ENCODE measurements at regions of chr12 and their contacts with region 1.

Region 1: GRCh38 chr12:12736759-12737676 is 19.9 kb downstream of the CDKN1B start:
- DNase-seq: peak; percentile 84
- ATAC-seq: peak; percentile 95
- H3K4me3 Mint-ChIP-seq: peak overlapping the region; percentile 73
- H3K27ac Mint-ChIP-seq: peak overlapping the region; percentile 89
- H3K4me1 Mint-ChIP-seq: peaks cover 68% of the 10 kb centered on the region
- H3K27me3 Mint-ChIP-seq: no peaks in the 10 kb centered on the region

Region 2: DNA sequence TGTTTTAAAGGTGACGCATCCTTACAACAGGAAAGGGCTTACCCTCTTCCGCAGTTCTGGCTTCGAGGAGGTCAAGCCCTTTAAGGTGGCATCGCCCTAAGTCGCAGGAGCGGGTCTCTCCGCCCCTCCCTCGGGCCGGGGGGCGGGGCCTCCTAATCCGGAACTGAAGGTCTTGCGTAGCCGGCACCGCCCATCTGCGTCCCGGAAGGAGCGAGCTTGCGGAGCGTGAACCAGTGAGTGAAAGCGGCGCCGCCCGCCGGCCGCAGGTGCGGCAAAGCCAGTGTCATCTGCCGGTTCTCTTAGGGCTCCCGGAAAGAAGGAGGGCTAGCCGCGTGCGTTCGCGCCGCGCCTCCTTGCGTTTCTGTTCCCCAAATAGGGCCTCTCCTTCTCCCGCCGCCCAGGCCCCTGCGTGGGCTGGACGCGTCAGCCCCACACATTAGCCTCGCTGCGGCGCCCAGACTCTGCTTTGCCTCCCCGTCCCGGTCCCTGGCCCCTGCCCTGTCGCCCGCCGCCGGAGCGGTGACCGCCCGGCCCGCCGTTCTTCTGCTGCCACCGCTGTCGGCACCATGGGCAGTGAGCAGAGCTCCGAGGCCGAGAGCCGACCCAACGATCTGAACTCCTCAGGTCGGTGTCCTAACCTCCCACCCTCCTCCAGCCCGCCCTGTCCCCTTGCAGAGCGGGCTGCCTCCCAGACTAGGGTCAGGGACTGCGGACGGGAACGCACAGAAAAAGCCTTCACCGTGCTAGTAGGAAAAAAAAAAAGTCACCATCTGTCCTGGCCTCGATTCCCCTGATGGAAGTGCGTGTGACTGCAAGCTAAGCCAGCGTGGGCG is 379.9 kb before region 1 on chr12 and contains the start of gene BORCS5:
- CTCF ChIA-PET with region 1: interaction called, 11 read pairs
- POLR2A ChIA-PET with region 1: interaction called, 33 read pairs
- DNase-seq: peak; percentile 99
- ATAC-seq: peak; percentile 94
- H3K4me3 Mint-ChIP-seq: peak within 1 kb of the TSS; percentile 88
- H3K27ac Mint-ChIP-seq: peak within 1 kb of the TSS; percentile 94
- H3K4me1 Mint-ChIP-seq: peaks cover 48% of the 10 kb centered on the region
- H3K27me3 Mint-ChIP-seq: no peaks in the 10 kb centered on the region
- total RNA-seq, gene BORCS5: 18.8 to 21.2 TPM

Region 3: GRCh38 chr12:12562585-12563261 is 174.3 kb before region 1 on chr12 and contains the start of gene DUSP16:
- CTCF ChIA-PET with region 1: interaction called, 15 read pairs
- POLR2A ChIA-PET with region 1: interaction called, 12 read pairs
- DNase-seq: peak; percentile 88
- ATAC-seq: peak; percentile 88
- H3K4me3 Mint-ChIP-seq: peak within 1 kb of the TSS; percentile 83
- H3K27ac Mint-ChIP-seq: peak within 1 kb of the TSS; percentile 91
- H3K4me1 Mint-ChIP-seq: peaks cover 35% of the 10 kb centered on the region
- H3K27me3 Mint-ChIP-seq: peaks cover 5% of the 10 kb centered on the region
- total RNA-seq, gene DUSP16: 17.4 to 19.0 TPM

Region 4: DNA sequence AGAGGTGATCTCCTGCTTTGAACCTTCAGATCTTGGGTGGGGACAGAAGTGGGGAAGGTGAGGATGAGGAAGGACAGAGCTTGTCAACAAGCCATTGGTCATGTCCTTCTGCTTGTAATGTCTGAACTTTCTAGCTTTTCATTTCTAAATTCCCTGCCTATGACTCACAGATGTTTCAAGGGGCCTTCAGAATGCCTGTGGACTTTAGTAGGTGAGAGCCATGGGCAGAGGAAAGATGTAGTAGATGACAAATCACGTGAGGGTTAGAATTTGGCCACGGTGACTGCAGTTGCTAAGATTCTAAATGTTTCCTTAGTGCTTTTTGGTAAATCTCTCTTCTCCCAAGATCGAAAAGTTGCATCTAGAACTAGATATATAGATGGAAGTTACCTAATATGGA is 144.1 kb before region 1 on chr12:
- CTCF ChIA-PET with region 1: no interaction called
- POLR2A ChIA-PET with region 1: no interaction called
- DNase-seq: no peak
- ATAC-seq: no peak
- H3K4me3 Mint-ChIP-seq: no peak overlapping the region
- H3K27ac Mint-ChIP-seq: no peak overlapping the region
- H3K4me1 Mint-ChIP-seq: peaks cover 9% of the 10 kb centered on the region
- H3K27me3 Mint-ChIP-seq: peaks cover 9% of the 10 kb centered on the region

Region 5: GRCh38 chr12:12654691-12655460 is 82.1 kb before region 1 on chr12:
- CTCF ChIA-PET with region 1: interaction called, 13 read pairs
- POLR2A ChIA-PET with region 1: interaction called, 4 read pairs
- DNase-seq: no peak
- ATAC-seq: no peak
- H3K4me3 Mint-ChIP-seq: no peak overlapping the region
- H3K27ac Mint-ChIP-seq: no peak overlapping the region
- H3K4me1 Mint-ChIP-seq: peaks cover 8% of the 10 kb centered on the region
- H3K27me3 Mint-ChIP-seq: no peaks in the 10 kb centered on the region

Region 6: DNA sequence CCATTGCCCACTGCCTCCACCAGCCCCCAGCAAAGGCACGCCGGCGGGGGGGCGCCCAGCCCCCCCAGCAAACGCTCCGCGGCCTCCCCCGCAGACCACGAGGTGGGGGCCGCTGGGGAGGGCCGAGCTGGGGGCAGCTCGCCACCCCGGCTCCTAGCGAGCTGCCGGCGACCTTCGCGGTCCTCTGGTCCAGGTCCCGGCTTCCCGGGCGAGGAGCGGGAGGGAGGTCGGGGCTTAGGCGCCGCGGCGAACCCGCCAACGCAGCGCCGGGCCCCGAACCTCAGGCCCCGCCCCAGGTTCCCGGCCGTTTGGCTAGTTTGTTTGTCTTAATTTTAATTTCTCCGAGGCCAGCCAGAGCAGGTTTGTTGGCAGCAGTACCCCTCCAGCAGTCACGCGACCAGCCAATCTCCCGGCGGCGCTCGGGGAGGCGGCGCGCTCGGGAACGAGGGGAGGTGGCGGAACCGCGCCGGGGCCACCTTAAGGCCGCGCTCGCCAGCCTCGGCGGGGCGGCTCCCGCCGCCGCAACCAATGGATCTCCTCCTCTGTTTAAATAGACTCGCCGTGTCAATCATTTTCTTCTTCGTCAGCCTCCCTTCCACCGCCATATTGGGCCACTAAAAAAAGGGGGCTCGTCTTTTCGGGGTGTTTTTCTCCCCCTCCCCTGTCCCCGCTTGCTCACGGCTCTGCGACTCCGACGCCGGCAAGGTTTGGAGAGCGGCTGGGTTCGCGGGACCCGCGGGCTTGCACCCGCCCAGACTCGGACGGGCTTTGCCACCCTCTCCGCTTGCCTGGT is 20.0 kb before region 1 on chr12 and contains the start of gene CDKN1B:
- CTCF ChIA-PET with region 1: interaction called, 36 read pairs
- POLR2A ChIA-PET with region 1: interaction called, 516 read pairs
- DNase-seq: peak; percentile 92
- ATAC-seq: peak; percentile 71
- H3K4me3 Mint-ChIP-seq: peak within 1 kb of the TSS; percentile 99
- H3K27ac Mint-ChIP-seq: peak within 1 kb of the TSS; percentile 98
- H3K4me1 Mint-ChIP-seq: peaks cover 25% of the 10 kb centered on the region
- H3K27me3 Mint-ChIP-seq: no peaks in the 10 kb centered on the region
- total RNA-seq, gene CDKN1B: 90.5 to 96.7 TPM

Region 7: DNA sequence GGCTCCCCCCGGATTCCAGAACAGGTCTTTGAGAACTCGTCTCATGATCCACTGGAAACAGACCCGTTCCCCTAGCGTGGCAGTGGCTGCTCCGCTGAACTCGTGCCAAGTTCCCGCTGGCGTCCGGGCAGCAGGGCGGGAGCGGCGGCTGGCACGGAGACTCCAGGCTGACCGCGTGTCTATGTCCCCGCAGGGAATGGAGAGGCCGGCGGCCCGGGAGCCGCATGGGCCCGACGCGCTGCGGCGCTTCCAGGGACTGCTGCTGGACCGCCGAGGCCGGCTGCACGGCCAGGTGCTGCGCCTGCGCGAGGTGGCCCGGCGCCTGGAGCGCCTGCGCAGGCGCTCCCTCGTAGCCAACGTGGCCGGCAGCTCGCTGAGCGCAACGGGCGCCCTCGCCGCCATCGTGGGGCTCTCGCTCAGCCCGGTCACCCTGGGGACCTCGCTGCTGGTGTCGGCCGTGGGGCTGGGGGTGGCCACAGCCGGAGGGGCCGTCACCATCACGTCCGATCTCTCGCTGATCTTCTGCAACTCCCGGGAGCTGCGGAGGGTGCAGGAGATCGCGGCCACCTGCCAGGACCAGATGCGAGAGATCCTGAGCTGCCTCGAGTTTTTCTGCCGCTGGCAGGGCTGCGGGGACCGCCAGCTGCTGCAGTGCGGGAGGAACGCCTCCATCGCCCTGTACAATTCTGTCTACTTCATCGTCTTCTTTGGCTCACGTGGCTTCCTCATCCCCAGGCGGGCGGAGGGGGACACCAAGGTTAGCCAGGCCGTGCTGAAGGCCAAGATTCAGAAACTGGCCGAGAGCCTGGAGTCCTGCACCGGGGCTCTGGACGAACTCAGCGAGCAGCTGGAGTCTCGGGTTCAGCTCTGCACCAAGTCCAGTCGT is 49.9 kb after region 1 on chr12:
- CTCF ChIA-PET with region 1: interaction called, 10 read pairs
- POLR2A ChIA-PET with region 1: interaction called, 14 read pairs
- DNase-seq: peak; percentile 72
- ATAC-seq: peak; percentile 94
- H3K4me3 Mint-ChIP-seq: peak overlapping the region; percentile 80
- H3K27ac Mint-ChIP-seq: peak overlapping the region; percentile 87
- H3K4me1 Mint-ChIP-seq: peaks cover 43% of the 10 kb centered on the region
- H3K27me3 Mint-ChIP-seq: no peaks in the 10 kb centered on the region

Measured in activated CD8-positive, alpha-beta T cell treated with anti-CD3 and anti-CD28 coated beads, Interleukin-2, amount 10 ng/mL, durations not matched to agents 7 days and 5 days (primary cell).